Heart left ventricle (tissue), 16 donors: ENCODE measurements at regions of chr20 and their contacts with region 1.

Region 1: DNA sequence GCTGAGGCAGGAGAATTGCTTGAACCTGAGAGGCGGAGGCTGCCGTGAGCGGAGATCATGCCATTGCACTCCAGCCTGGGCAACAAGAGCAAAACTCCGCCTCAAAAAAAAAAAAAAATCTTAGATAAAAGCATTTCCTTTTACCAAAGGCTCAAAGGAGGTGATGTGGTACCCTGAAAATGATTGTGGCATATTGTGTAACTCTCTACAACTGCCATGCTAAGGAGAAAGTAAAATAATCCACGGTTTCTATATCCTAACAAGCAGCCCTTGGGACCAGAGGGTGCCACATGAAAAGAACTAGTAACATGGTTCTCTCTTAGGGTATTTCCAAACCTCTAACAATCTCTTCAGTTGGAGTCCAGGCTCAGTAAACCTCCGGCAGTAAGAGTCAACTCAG is 38.8 kb upstream of the SLA2 start:
- DNase-seq: no peak
- ATAC-seq: no peak
- H3K4me3 ChIP-seq: no peak overlapping the region
- H3K27ac ChIP-seq: no peak overlapping the region
- H3K4me1 ChIP-seq: peaks cover 0 to 13% (median 0%) of the 10 kb centered on the region in 12 donors
- H3K27me3 ChIP-seq: no peaks in the 10 kb centered on the region
- CTCF ChIP-seq: no peak
- POLR2A ChIP-seq: no peak

Region 2: DNA sequence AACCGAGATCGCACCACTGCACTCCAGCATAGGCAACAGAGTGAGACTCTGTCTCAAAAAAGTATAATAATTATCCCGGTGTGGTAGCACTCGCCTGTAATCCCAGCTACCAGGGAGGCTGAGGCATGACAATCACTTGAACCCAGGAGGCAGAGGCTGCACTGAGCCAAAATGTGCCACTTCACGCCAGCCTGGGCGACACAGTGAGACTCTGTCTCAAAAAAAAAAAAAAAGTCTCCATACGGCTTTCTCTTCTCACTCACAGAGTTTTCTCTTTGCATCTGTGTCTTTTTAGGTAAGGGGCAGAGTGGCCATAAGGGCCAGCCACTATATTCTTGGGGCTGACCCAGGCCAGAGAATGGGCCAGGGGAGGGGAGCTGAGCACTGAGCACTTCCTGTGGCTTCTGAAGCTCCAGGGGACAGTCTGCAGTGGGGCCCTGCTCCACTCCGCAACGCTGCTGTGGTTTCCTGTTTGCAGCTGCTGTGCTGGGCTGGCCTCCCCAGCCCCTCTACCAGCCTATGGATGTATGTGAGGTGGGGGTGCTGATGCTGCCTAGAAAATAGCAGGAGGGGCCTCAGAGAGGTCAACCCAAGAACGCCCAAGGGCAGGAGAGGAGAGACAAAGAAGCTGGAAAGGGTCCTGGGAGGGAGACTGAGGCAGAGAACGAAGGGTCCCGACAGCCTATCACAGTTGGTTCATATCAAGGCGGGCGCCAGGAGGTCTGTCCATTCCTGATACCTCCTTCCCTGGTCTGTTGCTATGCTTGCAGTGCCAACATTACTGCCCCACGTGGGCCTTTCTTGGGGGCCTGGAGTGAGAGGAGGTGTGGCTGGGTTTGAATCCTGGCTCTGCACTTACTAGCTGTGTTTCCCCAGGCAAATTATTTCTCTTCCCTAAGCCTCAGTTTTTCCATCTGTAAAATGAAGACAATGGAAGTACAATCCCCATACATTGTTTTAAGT is 54.7 kb before region 1 on chr20:
- intact Hi-C with region 1: loop called in 1 of 10 experiments (anchors 10 kb)
- DNase-seq: no peak
- ATAC-seq: peak in 1 of 4 donors; percentile 50
- H3K4me3 ChIP-seq: no peak overlapping the region
- H3K27ac ChIP-seq: peak overlapping the region in 1 of 12 donors; percentile 25
- H3K4me1 ChIP-seq: peaks cover 0 to 19% (median 0%) of the 10 kb centered on the region in 12 donors
- H3K27me3 ChIP-seq: no peaks in the 10 kb centered on the region
- CTCF ChIP-seq: no peak
- POLR2A ChIP-seq: no peak